ENCODE measurements at regions of chr1 and their contacts with region 1.

Region 1: GRCh38 chr1:106914858-106915257 is 141.6 kb upstream of the PRMT6 start:
- DNase-seq: no peak
- ATAC-seq: no peak
- H3K4me3 ChIP-seq: no peak overlapping the region
- H3K27ac ChIP-seq: no peak overlapping the region
- H3K4me1 ChIP-seq: no peaks in the 10 kb centered on the region
- H3K27me3 ChIP-seq: no peaks in the 10 kb centered on the region
- CTCF ChIP-seq: no peak

Region 2: DNA sequence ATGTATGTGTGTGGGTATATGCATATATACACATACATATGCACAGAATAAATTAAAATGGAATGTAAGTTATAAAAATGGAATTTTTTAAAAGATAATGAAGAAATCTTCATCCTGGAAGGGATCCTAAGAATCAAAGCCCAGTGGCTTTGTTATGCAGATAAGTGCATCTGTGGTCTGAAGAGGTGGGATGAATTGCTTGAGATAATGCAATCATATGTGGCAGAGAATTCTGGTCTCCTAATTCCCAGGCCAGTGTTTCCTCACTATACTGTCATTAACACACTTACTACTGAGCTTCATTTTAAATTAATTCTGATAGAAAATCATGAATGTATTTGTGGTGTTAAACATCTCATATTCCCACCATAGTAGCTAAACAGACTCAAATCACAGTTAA is 54.9 kb after region 1 on chr1:
- intact Hi-C with region 1: loop called in 1 of 10 experiments (anchors 2 kb)
- DNase-seq: no peak
- ATAC-seq: no peak
- H3K4me3 ChIP-seq: no peak overlapping the region
- H3K27ac ChIP-seq: no peak overlapping the region
- H3K4me1 ChIP-seq: no peaks in the 10 kb centered on the region
- H3K27me3 ChIP-seq: peaks cover 0 to 3% (median 0%) of the 10 kb centered on the region in 7 donors
- CTCF ChIP-seq: no peak

Region 3: DNA sequence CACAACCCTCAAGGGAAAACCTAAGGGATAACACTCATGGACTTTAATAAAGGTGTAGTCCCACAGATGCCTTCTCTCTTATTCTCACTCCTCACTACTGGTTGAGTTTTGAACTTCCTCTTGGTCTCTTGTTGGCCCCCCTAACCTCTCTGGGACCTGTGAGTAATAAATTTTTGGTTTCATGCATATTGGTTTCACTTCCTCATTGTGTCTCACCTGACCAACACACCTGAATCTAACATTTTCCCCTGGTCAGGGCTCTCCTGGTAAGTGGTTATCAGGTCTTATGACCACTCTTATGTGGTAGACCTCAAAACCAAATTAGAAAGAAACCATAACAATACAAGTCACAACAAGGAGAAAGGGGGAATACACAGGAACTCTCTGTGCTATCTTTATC is 81.1 kb after region 1 on chr1:
- intact Hi-C with region 1: no loop called
- DNase-seq: no peak
- ATAC-seq: no peak
- H3K4me3 ChIP-seq: no peak overlapping the region
- H3K27ac ChIP-seq: no peak overlapping the region
- H3K4me1 ChIP-seq: no peaks in the 10 kb centered on the region
- H3K27me3 ChIP-seq: no peaks in the 10 kb centered on the region
- CTCF ChIP-seq: no peak